Psoas muscle (tissue), 8 donors: ENCODE measurements at regions of chr9 and their contacts with region 1.

Region 1: GRCh38 chr9:89716559-89716958 is 111.7 kb downstream of the GADD45G start:
- DNase-seq: no peak
- ATAC-seq: no peak
- H3K4me3 ChIP-seq: no peak overlapping the region
- H3K27ac ChIP-seq: no peak overlapping the region
- H3K4me1 ChIP-seq: peaks cover 7% of the 10 kb centered on the region
- H3K27me3 ChIP-seq: no peaks in the 10 kb centered on the region
- CTCF ChIP-seq: no peak

Region 2: GRCh38 chr9:89437000-89437631 is 279.4 kb before region 1 on chr9:
- intact Hi-C with region 1: no loop called
- DNase-seq: no peak
- ATAC-seq: no peak
- H3K4me3 ChIP-seq: no peak overlapping the region
- H3K27ac ChIP-seq: no peak overlapping the region
- H3K4me1 ChIP-seq: peaks cover 52% of the 10 kb centered on the region
- H3K27me3 ChIP-seq: no peaks in the 10 kb centered on the region
- CTCF ChIP-seq: no peak

Region 3: GRCh38 chr9:89675058-89675742 is 41.4 kb before region 1 on chr9:
- intact Hi-C with region 1: loop called in 1 of 2 experiments (anchors 5 kb)
- DNase-seq: peak; percentile 71 to 91
- ATAC-seq: peak; percentile 90 to 94 (median 90)
- H3K4me3 ChIP-seq: no peak overlapping the region
- H3K27ac ChIP-seq: peak overlapping the region; percentile 78
- H3K4me1 ChIP-seq: peaks cover 41% of the 10 kb centered on the region
- H3K27me3 ChIP-seq: no peaks in the 10 kb centered on the region
- CTCF ChIP-seq: no peak